ENCODE measurements at regions of chr19 and their contacts with region 1.

Region 1: GRCh38 chr19:19385108-19385899 is 20.2 kb upstream of the GATAD2A start:
- DNase-seq: peak; percentile 78 to 99
- ATAC-seq: peak; percentile 98 to 99
- H3K4me3 ChIP-seq: peak overlapping the region; percentile 80
- H3K27ac ChIP-seq: peak overlapping the region; percentile 85 to 98
- H3K4me1 ChIP-seq: peaks cover 10% of the 10 kb centered on the region; the same call in 1 of the 3 replicates
- CTCF ChIP-seq: no peak
- EP300 ChIP-seq: no peak
- POLR2A ChIP-seq: peak; percentile 73
- RAD21 ChIP-seq: no peak

Region 2: GRCh38 chr19:19404879-19405860 is 19.9 kb after region 1 on chr19 and contains the start of gene GATAD2A:
- CTCF ChIA-PET with region 1: no interaction called
- POLR2A ChIA-PET with region 1: interaction called, 14 read pairs
- DNase-seq: peak; percentile 32 to 87
- ATAC-seq: peak; percentile 81 to 88
- H3K4me3 ChIP-seq: peak within 1 kb of the TSS; percentile 97
- H3K27ac ChIP-seq: peak within 1 kb of the TSS; percentile 89 to 97
- H3K4me1 ChIP-seq: peaks cover 33% of the 10 kb centered on the region
- CTCF ChIP-seq: no peak
- EP300 ChIP-seq: no peak
- POLR2A ChIP-seq: no peak; the same call in none of the 2 replicates
- RAD21 ChIP-seq: no peak; a peak in 1 of 5 replicates
- polyA plus RNA-seq, gene GATAD2A: 12.5 and 25.2 TPM in 2 replicates

Region 3: GRCh38 chr19:19420570-19421298 is 35.4 kb after region 1 on chr19:
- CTCF ChIA-PET with region 1: no interaction called
- POLR2A ChIA-PET with region 1: no interaction called
- DNase-seq: no peak
- ATAC-seq: 0 out of 6 replicates have a peak, but pooled peaks of 1 of the 2 experiments have one; percentile 13
- H3K4me3 ChIP-seq: no peak overlapping the region
- H3K27ac ChIP-seq: no peak overlapping the region
- H3K4me1 ChIP-seq: no peaks in the 10 kb centered on the region
- CTCF ChIP-seq: no peak
- EP300 ChIP-seq: no peak
- POLR2A ChIP-seq: no peak
- RAD21 ChIP-seq: no peak

Measured in A549 (cell line).